ENCODE measurements at regions of chr19 and their contacts with region 1.

Region 1: DNA sequence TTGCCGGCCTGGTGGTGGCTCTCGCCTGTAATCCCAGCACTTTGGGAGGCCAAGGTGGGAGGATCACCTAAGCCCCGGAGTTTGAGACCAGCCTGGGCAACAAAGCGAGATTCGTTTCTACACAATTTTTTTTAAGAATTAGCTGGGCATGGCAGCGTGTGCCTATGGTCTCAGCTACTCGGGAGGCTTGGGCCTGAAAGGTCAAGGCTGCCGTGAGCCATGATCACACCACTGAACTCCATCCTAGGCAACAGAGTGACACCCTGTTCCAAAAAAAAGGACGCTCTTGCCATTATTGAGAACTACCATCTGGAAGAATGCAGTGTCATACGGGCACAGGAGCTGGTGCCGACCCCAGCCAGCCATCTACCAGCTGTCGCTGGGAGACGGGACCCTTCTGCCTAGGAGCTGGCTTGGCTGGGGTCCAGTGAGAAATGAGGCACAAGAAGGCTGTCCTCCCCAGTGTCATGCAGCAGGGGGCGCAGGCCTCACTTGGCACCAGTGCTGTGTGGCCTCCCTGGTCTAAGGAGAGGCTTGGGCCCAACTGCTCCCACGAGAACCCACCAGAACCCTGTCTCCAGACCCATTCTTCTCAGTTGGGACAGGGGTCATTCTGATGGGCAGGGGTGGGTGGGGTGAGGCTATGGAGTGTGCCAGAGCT is 12.2 kb upstream of the RELB start:
- DNase-seq: peak; percentile 78
- ATAC-seq: peak; percentile 86
- H3K4me3 ChIP-seq: no peak overlapping the region
- H3K4me3 Mint-ChIP-seq: no peak overlapping the region
- H3K27ac ChIP-seq: no peak overlapping the region
- H3K27ac Mint-ChIP-seq: peak overlapping the region; percentile 65
- H3K4me1 ChIP-seq: no peaks in the 10 kb centered on the region
- H3K4me1 Mint-ChIP-seq: peaks cover 4% of the 10 kb centered on the region
- H3K27me3 ChIP-seq: no peaks in the 10 kb centered on the region
- H3K27me3 Mint-ChIP-seq: no peaks in the 10 kb centered on the region
- CTCF ChIP-seq: peak; percentile 73

Region 2: DNA sequence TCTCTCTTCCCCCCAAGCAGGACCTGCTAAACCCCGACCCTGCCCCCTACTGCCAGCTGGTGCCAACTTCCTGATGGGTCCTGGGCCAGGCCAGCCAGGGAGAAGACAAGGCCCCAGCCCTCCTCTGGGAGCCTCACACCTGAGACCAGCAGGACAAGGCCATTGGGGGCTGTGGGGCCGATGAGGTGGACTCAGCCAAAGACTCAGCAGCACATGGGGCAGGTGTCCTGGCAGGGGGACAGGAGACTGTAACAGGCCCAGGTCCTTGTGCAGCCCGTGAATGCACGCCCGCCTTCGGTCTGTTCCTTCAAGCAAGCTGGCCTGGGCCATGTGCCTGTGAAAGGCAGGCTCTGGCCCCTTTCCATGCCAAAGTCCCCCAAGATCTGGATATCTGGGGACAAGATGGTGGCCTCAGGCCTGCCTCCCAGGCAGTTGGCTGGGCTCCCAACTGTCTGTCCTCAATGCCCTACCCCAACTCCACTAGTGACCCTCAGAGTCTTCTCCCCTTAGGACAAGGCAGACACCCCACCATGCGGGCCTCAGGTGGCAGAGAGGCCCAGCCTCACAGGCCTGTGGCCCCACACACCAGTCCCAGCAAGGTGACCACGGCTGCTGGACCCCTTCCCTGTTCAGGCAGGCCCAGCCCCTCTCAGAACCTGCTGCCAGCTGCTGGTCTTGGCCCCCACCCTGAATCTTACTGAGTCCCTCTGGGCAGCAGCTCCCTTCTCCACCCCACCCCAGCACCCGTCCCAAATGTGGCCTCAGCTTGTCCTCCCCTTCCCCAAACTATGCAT is 305.4 kb before region 1 on chr19:
- CTCF ChIA-PET with region 1: no interaction called
- POLR2A ChIA-PET with region 1: no interaction called
- intact Hi-C with region 1: no loop called
- DNase-seq: no peak
- ATAC-seq: no peak
- H3K4me3 ChIP-seq: no peak overlapping the region
- H3K4me3 Mint-ChIP-seq: no peak overlapping the region
- H3K27ac ChIP-seq: no peak overlapping the region
- H3K27ac Mint-ChIP-seq: no peak overlapping the region
- H3K4me1 ChIP-seq: peaks cover 8 to 18% of the 10 kb centered on the region in 2 donors
- H3K4me1 Mint-ChIP-seq: peaks cover 15% of the 10 kb centered on the region
- H3K27me3 ChIP-seq: peaks cover 0 to 11% (median 0%) of the 10 kb centered on the region in 4 experiments
- H3K27me3 Mint-ChIP-seq: peaks cover 22% of the 10 kb centered on the region
- CTCF ChIP-seq: no peak

Region 3: GRCh38 chr19:44782729-44783128 is 206.3 kb before region 1 on chr19:
- CTCF ChIA-PET with region 1: no interaction called
- POLR2A ChIA-PET with region 1: no interaction called
- intact Hi-C with region 1: no loop called
- DNase-seq: no peak
- ATAC-seq: no peak
- H3K4me3 ChIP-seq: no peak overlapping the region
- H3K4me3 Mint-ChIP-seq: no peak overlapping the region
- H3K27ac ChIP-seq: no peak overlapping the region
- H3K27ac Mint-ChIP-seq: no peak overlapping the region
- H3K4me1 ChIP-seq: peaks cover 0 to 6% of the 10 kb centered on the region in 2 donors
- H3K4me1 Mint-ChIP-seq: peaks cover 5% of the 10 kb centered on the region
- H3K27me3 ChIP-seq: peaks cover 0 to 11% (median 0%) of the 10 kb centered on the region in 4 experiments
- H3K27me3 Mint-ChIP-seq: peaks cover 17% of the 10 kb centered on the region
- CTCF ChIP-seq: no peak

Region 4: GRCh38 chr19:44925114-44925891 is 63.7 kb before region 1 on chr19:
- CTCF ChIA-PET with region 1: no interaction called
- POLR2A ChIA-PET with region 1: no interaction called
- intact Hi-C with region 1: no loop called
- DNase-seq: no peak
- ATAC-seq: no peak
- H3K4me3 ChIP-seq: no peak overlapping the region
- H3K4me3 Mint-ChIP-seq: no peak overlapping the region
- H3K27ac ChIP-seq: no peak overlapping the region
- H3K27ac Mint-ChIP-seq: no peak overlapping the region
- H3K4me1 ChIP-seq: peaks cover 4 to 8% of the 10 kb centered on the region in 2 donors
- H3K4me1 Mint-ChIP-seq: peaks cover 6% of the 10 kb centered on the region
- H3K27me3 ChIP-seq: peaks cover 0 to 10% (median 5%) of the 10 kb centered on the region in 4 experiments
- H3K27me3 Mint-ChIP-seq: peaks cover 18% of the 10 kb centered on the region
- CTCF ChIP-seq: no peak

Region 5: GRCh38 chr19:45038931-45039893 is 50.2 kb after region 1 on chr19 and contains the start of gene CLASRP:
- CTCF ChIA-PET with region 1: interaction called, 21 read pairs
- POLR2A ChIA-PET with region 1: interaction called, 3 read pairs
- intact Hi-C with region 1: no loop called
- DNase-seq: peak; percentile 93
- ATAC-seq: peak; percentile 89
- H3K4me3 ChIP-seq: peak within 1 kb of the TSS; percentile 51 to 96 (median 94)
- H3K4me3 Mint-ChIP-seq: peak within 1 kb of the TSS; percentile 96
- H3K27ac ChIP-seq: peak within 1 kb of the TSS; percentile 93 to 96
- H3K27ac Mint-ChIP-seq: peak within 1 kb of the TSS; percentile 96
- H3K4me1 ChIP-seq: peaks cover 26 to 35% of the 10 kb centered on the region in 2 donors
- H3K4me1 Mint-ChIP-seq: peaks cover 40% of the 10 kb centered on the region
- H3K27me3 ChIP-seq: no peaks in the 10 kb centered on the region
- H3K27me3 Mint-ChIP-seq: no peaks in the 10 kb centered on the region
- CTCF ChIP-seq: no peak
- total RNA-seq, gene CLASRP: 277 and 285 TPM in 2 replicates

Region 6: DNA sequence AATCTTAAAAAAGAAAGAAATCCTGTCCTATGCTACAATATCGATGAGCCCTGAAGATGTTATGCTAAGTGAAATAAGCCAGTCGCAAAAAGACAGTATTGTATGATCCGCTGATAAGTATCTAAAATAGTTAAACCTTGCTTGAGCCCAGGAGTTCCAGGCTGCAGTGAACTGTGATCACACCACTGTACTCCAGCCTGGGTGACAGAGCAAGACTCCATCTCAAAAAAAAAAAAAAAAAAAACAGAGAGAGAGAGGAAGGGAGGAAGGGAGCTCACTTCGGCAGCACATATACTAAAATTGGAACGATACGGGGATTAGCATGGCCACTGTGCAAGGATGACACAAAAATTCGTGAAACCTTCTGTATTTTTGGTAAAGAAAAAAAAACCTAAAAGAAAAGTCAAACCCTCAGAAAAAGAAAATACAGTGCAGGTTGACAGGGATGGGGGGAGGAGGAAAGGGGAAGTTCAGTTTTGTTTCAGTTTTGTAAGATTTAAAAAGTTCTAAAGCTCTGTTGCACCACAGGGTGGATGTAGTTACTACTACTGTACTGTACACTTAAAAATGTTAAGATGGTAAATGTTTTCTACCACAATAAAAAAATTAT is 58.3 kb after region 1 on chr19:
- CTCF ChIA-PET with region 1: interaction called, 21 read pairs
- POLR2A ChIA-PET with region 1: no interaction called
- intact Hi-C with region 1: loop called (anchors 1 kb)
- DNase-seq: peak; percentile 81
- ATAC-seq: peak; percentile 46
- H3K4me3 ChIP-seq: peak overlapping the region; percentile 34 to 71 (median 51)
- H3K4me3 Mint-ChIP-seq: peak overlapping the region; percentile 90
- H3K27ac ChIP-seq: peak overlapping the region; percentile 61 to 78
- H3K27ac Mint-ChIP-seq: peak overlapping the region; percentile 89
- H3K4me1 ChIP-seq: peaks cover 65 to 69% of the 10 kb centered on the region in 2 donors
- H3K4me1 Mint-ChIP-seq: peaks cover 68% of the 10 kb centered on the region
- H3K27me3 ChIP-seq: no peaks in the 10 kb centered on the region
- H3K27me3 Mint-ChIP-seq: no peaks in the 10 kb centered on the region
- CTCF ChIP-seq: peak; percentile 43